ENCODE measurements at regions of chr1 and their contacts with region 1.

Region 1: DNA sequence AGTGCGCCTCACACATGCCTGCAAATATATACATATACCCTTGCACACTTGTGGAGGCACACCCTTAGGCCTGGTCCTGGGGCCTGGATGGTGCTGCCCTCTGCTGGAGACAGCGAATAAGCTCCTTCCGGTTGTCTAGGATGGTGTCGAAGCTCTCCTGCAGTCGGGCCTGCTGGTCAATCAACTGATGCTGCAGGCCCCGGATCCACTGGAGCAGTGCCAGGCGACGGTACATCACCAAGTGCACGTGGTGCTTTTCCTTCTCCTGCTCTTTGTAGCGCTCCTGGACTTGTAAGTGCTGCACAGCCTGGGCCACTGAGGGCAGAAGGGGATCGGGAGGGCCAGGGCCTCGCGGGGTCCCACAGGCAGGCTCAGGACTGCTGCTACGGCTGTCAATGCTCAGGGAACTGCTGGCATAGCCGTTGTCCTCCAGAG is 3.1 kb downstream of the C1orf216 start:
- DNase-seq: peak; percentile 81 to 91
- ATAC-seq: peak; percentile 77
- H3K4me3 ChIP-seq: no peak overlapping the region
- H3K27ac ChIP-seq: no peak overlapping the region
- H3K4me1 ChIP-seq: no peaks in the 10 kb centered on the region
- H3K27me3 ChIP-seq: no peaks in the 10 kb centered on the region

Region 2: DNA sequence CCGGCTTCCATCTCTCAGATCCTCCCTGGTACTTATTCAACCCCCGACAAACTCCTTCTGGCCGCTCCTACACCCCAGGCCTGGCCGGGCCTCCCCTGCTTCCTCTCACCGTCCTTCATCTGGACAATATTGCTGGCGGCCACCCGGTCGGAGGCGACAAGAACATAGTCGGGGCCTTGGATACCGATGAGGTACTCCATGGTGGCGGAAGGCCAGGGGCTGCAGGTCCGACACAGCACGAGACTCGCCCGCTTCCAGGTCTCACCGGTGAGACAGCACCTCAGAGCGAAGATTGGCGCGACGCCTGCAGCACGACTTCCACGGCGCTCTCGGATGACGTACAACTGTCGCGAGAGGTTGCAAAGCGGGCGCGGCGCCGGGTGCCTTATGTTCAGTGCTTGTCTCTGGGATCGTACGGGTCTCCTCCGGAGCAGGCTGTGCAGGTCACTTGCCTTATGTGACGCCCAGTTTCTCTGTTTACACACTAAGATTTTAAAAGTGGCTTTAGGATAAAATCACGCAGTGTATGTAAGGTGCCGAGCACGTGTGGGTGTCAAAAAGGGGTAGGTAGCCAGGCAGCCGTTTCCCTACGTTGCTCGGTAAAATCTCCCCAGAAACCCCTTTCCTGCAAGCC is 74.2 kb before region 1 on chr1 and contains the start of gene PSMB2:
- intact Hi-C with region 1: loop called (anchors 2 to 5 kb)
- DNase-seq: peak; percentile 97 to 99
- ATAC-seq: peak; percentile 98
- H3K4me3 ChIP-seq: peak within 1 kb of the TSS; percentile 87 to 97
- H3K27ac ChIP-seq: peak within 1 kb of the TSS; percentile 25 to 90
- H3K4me1 ChIP-seq: no peaks in the 10 kb centered on the region
- H3K27me3 ChIP-seq: no peaks in the 10 kb centered on the region
- total RNA-seq, gene PSMB2: 35.9 to 36.2 TPM

Region 3: GRCh38 chr1:36323597-36324352 is 608.2 kb after region 1 on chr1 and contains the start of gene EVA1B:
- intact Hi-C with region 1: loop called in 1 of 2 experiments (anchors 10 kb)
- DNase-seq: peak; percentile 92 to 93
- ATAC-seq: peak; percentile 71
- H3K4me3 ChIP-seq: peak within 1 kb of the TSS; percentile 71 to 77
- H3K27ac ChIP-seq: peak within 1 kb of the TSS; percentile 47 to 81
- H3K4me1 ChIP-seq: no peaks in the 10 kb centered on the region
- H3K27me3 ChIP-seq: no peaks in the 10 kb centered on the region
- total RNA-seq, gene EVA1B: 44.7 to 58.3 TPM

Measured in aorta (tissue), 5 donors.